PC-9 (cell line): ENCODE measurements at regions of chr10 and their contacts with region 1.

Region 1: DNA sequence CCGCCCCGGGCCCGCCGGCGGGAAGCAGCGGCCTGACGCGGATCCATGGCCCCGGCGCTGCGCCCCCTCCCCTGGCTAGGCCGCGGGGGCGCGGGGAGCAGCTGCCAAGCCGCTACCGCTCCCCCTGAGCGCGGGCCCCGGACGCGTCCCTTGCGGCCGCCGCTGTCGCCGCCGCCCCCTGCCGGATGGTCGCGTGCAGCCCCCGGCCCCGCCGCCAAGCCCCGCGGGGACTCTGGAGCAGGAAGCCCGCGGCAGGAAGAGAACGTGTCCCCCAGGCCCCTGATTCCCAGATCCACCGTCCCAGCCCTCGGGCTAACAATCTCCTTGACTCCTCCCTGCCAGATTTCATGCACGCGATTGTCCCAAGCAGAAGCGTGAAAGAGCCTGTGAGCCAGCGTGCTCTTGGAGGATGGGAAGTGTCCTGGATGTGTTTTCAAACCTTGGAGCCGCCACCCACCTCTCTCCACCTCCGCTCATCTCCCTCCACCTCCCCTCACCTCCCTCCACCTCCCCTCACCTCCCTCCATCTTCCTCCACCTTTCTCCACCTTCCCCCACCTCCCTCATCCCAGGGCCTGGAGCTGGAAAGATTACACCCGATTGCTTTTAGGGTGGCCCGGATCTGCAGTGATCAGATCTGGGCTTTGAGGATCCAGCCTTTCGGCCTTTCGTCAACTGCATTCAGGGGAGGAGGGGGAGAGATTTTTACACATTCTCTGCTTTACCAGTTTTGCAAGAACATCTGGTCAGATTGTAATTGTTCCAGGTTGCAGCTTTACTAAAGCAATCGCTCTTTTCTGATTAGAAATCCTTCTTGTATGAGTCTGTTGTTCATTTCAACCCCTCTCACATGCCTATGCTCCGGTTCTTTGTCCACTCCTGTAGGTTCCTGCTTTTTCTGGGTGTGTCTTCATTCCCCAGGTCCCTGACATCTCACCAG is 570 bp upstream of the PRTFDC1 start:
- DNase-seq: peak; percentile 39
- H3K4me3 ChIP-seq: peak overlapping the region; percentile 52
- H3K27ac ChIP-seq: 0 out of 2 replicates have a peak overlapping the region, but pooled peaks have one; percentile 20
- H3K4me1 ChIP-seq: peaks cover 26% of the 10 kb centered on the region
- H3K27me3 ChIP-seq: no peaks in the 10 kb centered on the region
- CTCF ChIP-seq: no peak; the same call in 1 of the 2 replicates

Region 2: DNA sequence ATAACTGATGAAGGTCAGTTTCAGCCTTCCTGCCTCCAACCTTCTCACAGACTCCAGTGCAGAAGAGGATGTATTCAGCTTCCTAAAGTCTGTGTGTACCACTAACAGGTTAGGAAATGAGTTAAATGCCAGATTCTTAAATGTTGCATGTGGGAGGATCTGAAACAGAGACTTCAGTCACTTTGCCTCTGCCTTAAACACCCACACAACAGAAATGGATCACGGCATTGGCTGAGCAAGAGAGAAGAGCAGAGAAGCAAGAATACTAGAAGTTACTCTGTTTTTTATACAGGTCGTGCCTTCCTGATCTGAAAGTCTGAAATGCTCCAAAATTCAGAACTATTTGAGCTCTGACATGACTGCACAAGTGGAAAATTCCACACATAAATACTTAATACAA is 130.4 kb before region 1 on chr10:
- CTCF ChIA-PET with region 1: no interaction called
- POLR2A ChIA-PET with region 1: no interaction called
- intact Hi-C with region 1: loop called (anchors 5 kb)
- DNase-seq: no peak
- H3K4me3 ChIP-seq: no peak overlapping the region
- H3K27ac ChIP-seq: no peak overlapping the region
- H3K4me1 ChIP-seq: peaks cover 40% of the 10 kb centered on the region
- H3K27me3 ChIP-seq: no peaks in the 10 kb centered on the region
- CTCF ChIP-seq: no peak

Region 3: GRCh38 chr10:24894309-24894708 is 58.7 kb before region 1 on chr10:
- CTCF ChIA-PET with region 1: no interaction called
- POLR2A ChIA-PET with region 1: no interaction called
- intact Hi-C with region 1: loop called (anchors 5 kb)
- DNase-seq: peak in 1 of 2 experiments; percentile 67
- H3K4me3 ChIP-seq: no peak overlapping the region
- H3K27ac ChIP-seq: no peak overlapping the region
- H3K4me1 ChIP-seq: peaks cover 58% of the 10 kb centered on the region
- H3K27me3 ChIP-seq: no peaks in the 10 kb centered on the region
- CTCF ChIP-seq: no peak

Region 4: DNA sequence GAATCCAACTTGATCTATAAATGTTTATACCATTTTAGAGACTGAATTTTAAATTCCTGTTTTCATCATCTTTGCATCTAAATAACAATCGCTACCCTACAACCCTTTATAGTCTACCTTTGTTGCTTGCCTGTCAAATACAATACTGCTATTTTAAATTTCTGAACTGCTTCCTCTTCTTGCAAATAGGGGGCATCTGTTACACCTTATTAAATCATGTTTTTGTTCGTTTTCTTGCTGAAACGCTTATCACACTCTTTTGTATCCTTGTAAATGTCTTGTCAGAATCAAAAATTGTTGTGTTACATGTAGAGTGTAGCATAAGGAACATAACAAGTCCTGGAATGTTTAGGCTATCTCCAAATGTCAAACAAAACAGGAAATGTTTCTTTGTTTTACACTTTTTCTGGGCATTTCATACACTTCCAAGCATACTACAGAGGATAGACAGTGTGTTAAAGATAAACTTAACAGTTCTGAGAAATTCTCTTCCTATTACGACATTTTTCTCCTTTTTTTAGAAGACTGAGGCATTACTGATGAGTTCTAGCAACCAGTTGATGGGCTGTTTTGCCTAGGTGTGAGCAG is 503.1 kb after region 1 on chr10:
- CTCF ChIA-PET with region 1: no interaction called
- POLR2A ChIA-PET with region 1: no interaction called
- intact Hi-C with region 1: no loop called
- DNase-seq: no peak
- H3K4me3 ChIP-seq: no peak overlapping the region
- H3K27ac ChIP-seq: no peak overlapping the region
- H3K4me1 ChIP-seq: no peaks in the 10 kb centered on the region
- H3K27me3 ChIP-seq: no peaks in the 10 kb centered on the region
- CTCF ChIP-seq: no peak